ENCODE measurements at regions of chr2 and their contacts with region 1.

Region 1: GRCh38 chr2:85826990-85827878 is 61.6 kb downstream of the ST3GAL5 start:
- DNase-seq: peak; percentile 84
- H3K4me3 ChIP-seq: no peak overlapping the region
- H3K27ac ChIP-seq: no peak overlapping the region
- H3K4me1 ChIP-seq: peaks cover 7% of the 10 kb centered on the region
- H3K27me3 ChIP-seq: no peaks in the 10 kb centered on the region
- CTCF ChIP-seq: peak; percentile 95

Region 2: DNA sequence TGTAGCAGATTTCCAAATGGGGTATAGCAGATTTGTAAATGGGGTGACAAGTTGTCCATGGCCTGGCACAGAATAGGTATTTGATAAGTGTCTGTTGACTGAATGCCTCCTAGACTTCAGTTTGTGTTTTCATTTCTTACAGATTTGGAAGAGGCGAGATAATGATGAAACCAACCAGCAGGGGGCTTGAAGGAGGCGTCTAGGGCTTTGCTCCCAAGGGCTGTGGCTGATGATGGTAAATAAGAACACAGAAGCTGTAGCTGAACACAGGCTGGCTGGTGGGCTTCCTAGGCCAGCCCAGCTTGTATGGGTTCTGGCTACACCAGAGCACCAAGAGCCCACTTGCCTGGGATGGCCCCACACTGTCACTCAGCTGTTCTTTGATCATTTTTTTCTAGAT is 178.6 kb before region 1 on chr2:
- CTCF ChIA-PET with region 1: interaction called, 11 read pairs
- POLR2A ChIA-PET with region 1: no interaction called
- intact Hi-C with region 1: no loop called
- DNase-seq: peak; percentile 61
- H3K4me3 ChIP-seq: no peak overlapping the region
- H3K27ac ChIP-seq: no peak overlapping the region
- H3K4me1 ChIP-seq: no peaks in the 10 kb centered on the region
- H3K27me3 ChIP-seq: no peaks in the 10 kb centered on the region
- CTCF ChIP-seq: peak; percentile 46

Region 3: DNA sequence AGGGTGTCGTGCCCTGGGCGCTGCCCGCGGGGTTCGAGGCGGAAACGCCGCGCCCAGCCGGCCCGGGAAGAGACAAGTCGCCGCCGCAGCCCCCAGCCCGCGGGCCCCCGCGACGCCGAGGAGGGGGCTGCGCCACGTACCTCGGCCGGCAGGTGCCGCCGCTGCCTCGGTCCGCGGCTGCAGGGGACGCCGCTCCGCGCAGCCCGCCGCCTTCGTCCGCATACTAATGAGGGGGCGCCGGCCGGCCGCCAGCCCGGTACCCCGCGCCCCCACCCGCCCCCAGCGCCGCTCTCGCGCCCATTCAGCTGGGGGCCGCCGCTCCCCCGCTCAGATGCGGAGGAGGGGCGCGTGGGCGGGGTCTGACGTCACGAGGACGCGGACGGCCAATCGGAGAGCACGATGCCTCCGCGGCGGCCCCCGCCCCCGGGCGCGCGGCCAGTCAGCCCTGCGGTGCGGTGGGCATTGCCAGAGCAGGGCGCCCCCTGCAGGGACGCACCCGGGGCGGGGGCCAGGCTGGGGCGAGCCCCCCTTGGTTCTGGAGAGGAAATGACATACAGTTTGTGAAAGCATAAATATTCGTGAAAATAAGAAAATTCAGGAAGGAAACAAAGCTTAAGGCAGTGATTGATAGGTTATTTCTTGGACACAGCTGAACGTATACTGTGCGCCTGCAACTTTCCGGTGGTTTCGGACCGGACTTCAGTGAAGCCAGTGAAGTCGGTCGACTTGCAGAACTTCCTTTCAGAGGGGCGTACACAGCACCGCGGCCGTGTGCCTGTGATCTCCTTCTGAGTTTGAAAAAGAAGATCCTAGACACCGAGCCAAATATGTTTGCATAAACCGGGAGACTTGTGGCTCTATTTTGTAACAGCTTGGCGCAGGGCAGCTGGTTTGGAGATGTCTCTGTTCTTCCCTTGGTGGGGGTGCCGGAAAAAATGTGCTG is 61.7 kb after region 1 on chr2 and contains the start of gene ST3GAL5:
- CTCF ChIA-PET with region 1: interaction called, 13 read pairs
- POLR2A ChIA-PET with region 1: no interaction called
- intact Hi-C with region 1: loop called (anchors 5 kb)
- DNase-seq: peak; percentile 93
- H3K4me3 ChIP-seq: peak within 1 kb of the TSS; percentile 87
- H3K27ac ChIP-seq: peak within 1 kb of the TSS; percentile 85
- H3K4me1 ChIP-seq: peaks cover 29% of the 10 kb centered on the region
- H3K27me3 ChIP-seq: no peaks in the 10 kb centered on the region
- CTCF ChIP-seq: peak; percentile 76
- total RNA-seq, gene ST3GAL5: 25.3 and 27.1 TPM in 2 replicates

Region 4: DNA sequence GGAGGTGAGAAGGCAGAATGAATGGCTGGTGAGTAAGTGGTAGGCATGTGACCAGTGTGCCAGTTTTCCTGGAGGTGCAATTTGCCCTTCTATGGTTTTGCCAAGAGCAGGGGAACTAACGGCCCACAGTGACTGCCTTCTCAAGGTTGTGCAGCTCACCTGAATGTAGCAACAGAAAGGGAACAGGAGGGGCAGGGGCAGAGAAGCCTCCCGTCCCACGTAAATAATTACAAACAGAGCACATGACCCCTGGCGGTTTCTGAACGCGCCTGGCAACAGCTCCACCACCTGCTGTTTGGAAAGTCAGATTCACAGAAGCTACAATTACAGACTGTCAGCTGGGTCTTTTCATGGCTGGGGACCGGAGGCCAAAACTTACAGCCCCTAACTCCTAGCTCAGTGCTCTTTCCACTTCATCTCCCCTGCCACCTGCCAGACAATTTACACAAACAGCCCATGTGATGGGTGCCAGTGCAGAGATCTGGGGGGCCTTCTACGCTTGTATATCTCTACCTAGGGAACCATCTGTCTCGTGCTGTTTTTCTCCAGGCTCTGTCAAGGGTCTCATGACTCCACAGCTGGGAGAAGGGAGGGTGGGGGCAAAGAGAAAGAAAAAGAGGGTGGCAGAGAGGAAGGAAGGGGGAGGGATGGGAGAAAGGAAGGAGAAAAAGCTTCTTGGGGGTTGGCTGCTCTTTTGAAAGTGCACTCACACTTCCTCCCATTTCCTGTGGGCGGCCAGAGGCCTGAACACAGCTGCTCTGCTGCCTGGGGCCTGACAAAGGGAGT is 208.8 kb after region 1 on chr2:
- CTCF ChIA-PET with region 1: interaction called, 28 read pairs
- POLR2A ChIA-PET with region 1: no interaction called
- intact Hi-C with region 1: loop called (anchors 1 kb)
- DNase-seq: peak; percentile 85
- H3K4me3 ChIP-seq: peak overlapping the region; percentile 5
- H3K27ac ChIP-seq: peak overlapping the region; percentile 77
- H3K4me1 ChIP-seq: peaks cover 25% of the 10 kb centered on the region
- H3K27me3 ChIP-seq: no peaks in the 10 kb centered on the region
- CTCF ChIP-seq: peak; percentile 46

Region 5: DNA sequence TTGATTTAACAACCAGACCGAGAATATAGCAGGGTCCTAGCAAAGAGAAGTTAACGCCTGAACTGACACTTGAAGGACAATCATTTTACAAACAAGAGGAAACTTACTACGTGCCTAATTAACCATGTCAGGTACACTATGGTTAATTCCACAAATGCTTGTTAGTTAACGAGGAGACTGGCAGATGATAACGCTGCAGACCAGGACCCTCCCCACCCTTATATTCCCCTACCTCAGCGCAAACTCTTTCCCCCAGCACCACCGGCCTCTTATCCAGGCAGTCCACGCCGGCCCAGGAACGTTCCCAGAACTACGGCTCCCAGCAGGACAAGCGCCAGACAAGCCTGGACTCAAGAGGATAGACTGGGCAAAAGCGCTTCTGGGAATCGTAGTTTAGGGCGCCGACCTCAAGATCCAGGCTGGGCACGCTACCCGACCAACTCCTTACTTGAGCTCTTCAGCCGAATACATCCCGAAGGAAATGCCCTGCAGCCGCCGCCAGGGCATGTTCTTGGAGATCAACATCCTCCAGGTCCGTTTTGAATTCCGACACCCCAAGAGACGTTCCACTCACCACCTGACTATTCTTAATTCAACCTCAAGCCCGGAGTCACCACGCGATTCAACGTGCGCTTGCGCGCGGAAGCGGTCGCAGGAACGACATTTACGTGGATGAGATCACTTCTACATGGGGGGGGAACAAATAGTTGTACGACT is 278.2 kb after region 1 on chr2 and contains the start of gene POLR1A:
- CTCF ChIA-PET with region 1: interaction called, 12 read pairs
- POLR2A ChIA-PET with region 1: no interaction called
- intact Hi-C with region 1: no loop called
- DNase-seq: peak; percentile 96
- H3K4me3 ChIP-seq: peak within 1 kb of the TSS; percentile 86
- H3K27ac ChIP-seq: peak within 1 kb of the TSS; percentile 98
- H3K4me1 ChIP-seq: peaks cover 12% of the 10 kb centered on the region
- H3K27me3 ChIP-seq: no peaks in the 10 kb centered on the region
- CTCF ChIP-seq: no peak
- total RNA-seq, gene POLR1A: 70.8 and 81.2 TPM in 2 replicates

Measured in A673 (cell line).